Aorta (tissue), 5 donors: ENCODE measurements at regions of chr15 and their contacts with region 1.

Region 1: GRCh38 chr15:78750566-78750965 is 60.7 kb downstream of the ADAMTS7 start:
- DNase-seq: peak in 1 of 2 donors; percentile 67
- ATAC-seq: peak; percentile 82
- H3K4me3 ChIP-seq: no peak overlapping the region
- H3K27ac ChIP-seq: no peak overlapping the region
- H3K4me1 ChIP-seq: no peaks in the 10 kb centered on the region
- H3K27me3 ChIP-seq: no peaks in the 10 kb centered on the region

Region 2: GRCh38 chr15:78415286-78415685 is 335.3 kb before region 1 on chr15:
- intact Hi-C with region 1: no loop called
- DNase-seq: no peak
- ATAC-seq: no peak
- H3K4me3 ChIP-seq: no peak overlapping the region
- H3K27ac ChIP-seq: no peak overlapping the region
- H3K4me1 ChIP-seq: no peaks in the 10 kb centered on the region
- H3K27me3 ChIP-seq: no peaks in the 10 kb centered on the region

Region 3: DNA sequence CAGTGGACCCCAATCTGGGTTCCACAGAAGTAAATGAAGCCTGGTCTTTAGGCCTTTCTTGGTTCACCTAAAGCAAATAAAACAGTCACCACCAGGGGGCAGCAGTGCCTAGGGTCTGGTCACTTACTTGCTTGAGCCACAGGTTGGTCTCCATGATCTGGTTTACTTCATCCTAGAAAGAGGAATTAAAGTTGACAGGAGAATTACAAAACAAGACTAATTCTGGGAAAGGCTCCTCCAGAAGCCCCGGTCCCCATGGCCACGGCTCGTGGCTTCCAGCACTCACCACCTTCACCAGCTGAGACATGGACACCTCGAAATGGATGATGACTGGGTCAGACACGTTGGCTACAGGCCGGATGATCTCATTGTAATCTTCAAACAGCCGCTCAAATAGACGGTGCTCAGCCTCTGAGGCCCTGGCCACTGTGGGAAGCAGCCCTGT is 132.1 kb before region 1 on chr15:
- intact Hi-C with region 1: loop called (anchors 5 kb)
- DNase-seq: peak; percentile 89 to 92
- ATAC-seq: peak; percentile 75
- H3K4me3 ChIP-seq: no peak overlapping the region
- H3K27ac ChIP-seq: no peak overlapping the region
- H3K4me1 ChIP-seq: no peaks in the 10 kb centered on the region
- H3K27me3 ChIP-seq: no peaks in the 10 kb centered on the region

Region 4: GRCh38 chr15:78872972-78873792 is 122.6 kb after region 1 on chr15:
- intact Hi-C with region 1: loop called (anchors 10 kb)
- DNase-seq: peak; percentile 88 to 93
- ATAC-seq: peak; percentile 90
- H3K4me3 ChIP-seq: peak overlapping the region; percentile 61 to 94
- H3K27ac ChIP-seq: peak overlapping the region; percentile 97 to 99
- H3K4me1 ChIP-seq: peaks cover 0 to 3% of the 10 kb centered on the region in 2 donors
- H3K27me3 ChIP-seq: no peaks in the 10 kb centered on the region